HCT116 (cell line): ENCODE measurements at regions of chr14 and their contacts with region 1.

Region 1: DNA sequence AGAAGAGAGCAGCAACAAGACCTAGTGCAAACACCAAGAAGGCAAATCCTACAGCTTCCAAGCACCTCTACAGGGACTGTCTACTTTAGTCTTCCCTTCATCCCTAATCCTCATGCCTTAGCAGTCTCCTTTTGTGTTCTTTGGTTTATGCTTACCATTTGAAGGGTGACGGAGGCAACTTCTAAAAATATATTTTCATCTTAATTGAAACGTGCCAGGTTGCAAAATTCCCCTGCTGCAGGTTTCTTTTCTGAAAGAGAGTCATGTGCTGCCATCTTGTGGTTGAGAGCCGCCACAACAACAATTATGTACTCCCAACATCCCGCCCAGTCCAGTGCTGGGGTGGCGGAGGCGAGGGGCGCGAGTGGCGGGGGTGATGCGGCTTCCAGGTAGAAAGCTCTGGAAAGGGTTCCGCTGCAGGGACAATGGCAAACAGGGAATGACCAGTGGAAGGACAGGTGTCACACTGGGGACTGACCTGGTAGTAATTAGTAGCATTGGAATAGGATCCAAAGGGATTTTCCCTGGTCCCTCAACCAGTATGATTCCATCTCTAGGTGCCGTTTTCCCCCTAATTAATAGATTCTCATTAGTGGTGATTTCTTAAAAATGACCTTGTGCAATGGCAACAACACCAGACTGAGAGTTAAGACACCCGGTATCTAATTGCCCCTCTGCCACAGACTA is 80.3 kb upstream of the GNG2 start:
- DNase-seq: peak; percentile 49
- ATAC-seq: peak; percentile 84
- H3K4me3 ChIP-seq: peak overlapping the region in 1 of 2 experiments; percentile 16; a peak in 1 of 4 replicates
- H3K27ac ChIP-seq: no peak overlapping the region
- H3K4me1 ChIP-seq: peaks cover 0 to 10% of the 10 kb centered on the region in 2 experiments; a peak in 3 of 4 replicates
- H3K27me3 ChIP-seq: peaks cover 8% of the 10 kb centered on the region; the same call in 1 of the 2 replicates
- CTCF ChIP-seq: peak; percentile 72 to 90 (median 79)
- POLR2A ChIP-seq: no peak
- RAD21 ChIP-seq: peak; percentile 86

Region 2: DNA sequence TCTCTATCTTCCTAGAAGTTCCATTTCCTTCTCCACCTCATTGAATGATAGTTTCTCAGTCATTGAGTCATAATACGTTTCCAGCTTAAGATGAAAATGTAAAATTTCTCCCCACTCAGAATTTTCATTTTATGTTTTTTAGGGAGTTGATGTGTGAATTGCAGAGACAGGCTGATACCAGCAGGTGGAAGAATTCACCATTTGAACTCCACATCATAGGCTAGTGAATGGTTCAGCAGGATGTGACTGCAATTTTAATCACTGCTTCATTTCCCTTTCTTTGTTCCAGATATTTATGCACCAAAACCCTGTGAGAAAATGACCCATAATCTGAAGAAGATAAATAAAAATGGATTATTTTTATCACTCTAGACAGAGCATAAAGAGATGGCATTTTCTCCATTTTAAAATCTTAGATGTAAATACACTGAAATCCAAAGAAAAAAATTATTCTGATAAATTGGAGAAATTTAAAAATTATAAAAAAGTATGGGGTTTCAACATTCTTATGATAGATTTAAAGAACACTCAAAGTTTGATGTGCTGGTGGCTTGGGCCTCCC is 825.3 kb before region 1 on chr14:
- CTCF ChIA-PET with region 1: interaction called, 9 read pairs
- POLR2A ChIA-PET with region 1: no interaction called
- RAD21 ChIA-PET with region 1: no interaction called
- intact Hi-C with region 1: loop called (anchors 5 kb)
- DNase-seq: peak; percentile 23
- ATAC-seq: peak; percentile 52
- H3K4me3 ChIP-seq: peak overlapping the region in 1 of 2 experiments; percentile 23; a peak in 1 of 4 replicates
- H3K27ac ChIP-seq: peak overlapping the region; percentile 69
- H3K4me1 ChIP-seq: peaks cover 11 to 18% of the 10 kb centered on the region in 2 experiments
- H3K27me3 ChIP-seq: no peaks in the 10 kb centered on the region
- CTCF ChIP-seq: peak; percentile 56 to 69 (median 68)
- POLR2A ChIP-seq: no peak
- RAD21 ChIP-seq: peak; percentile 71

Region 3: DNA sequence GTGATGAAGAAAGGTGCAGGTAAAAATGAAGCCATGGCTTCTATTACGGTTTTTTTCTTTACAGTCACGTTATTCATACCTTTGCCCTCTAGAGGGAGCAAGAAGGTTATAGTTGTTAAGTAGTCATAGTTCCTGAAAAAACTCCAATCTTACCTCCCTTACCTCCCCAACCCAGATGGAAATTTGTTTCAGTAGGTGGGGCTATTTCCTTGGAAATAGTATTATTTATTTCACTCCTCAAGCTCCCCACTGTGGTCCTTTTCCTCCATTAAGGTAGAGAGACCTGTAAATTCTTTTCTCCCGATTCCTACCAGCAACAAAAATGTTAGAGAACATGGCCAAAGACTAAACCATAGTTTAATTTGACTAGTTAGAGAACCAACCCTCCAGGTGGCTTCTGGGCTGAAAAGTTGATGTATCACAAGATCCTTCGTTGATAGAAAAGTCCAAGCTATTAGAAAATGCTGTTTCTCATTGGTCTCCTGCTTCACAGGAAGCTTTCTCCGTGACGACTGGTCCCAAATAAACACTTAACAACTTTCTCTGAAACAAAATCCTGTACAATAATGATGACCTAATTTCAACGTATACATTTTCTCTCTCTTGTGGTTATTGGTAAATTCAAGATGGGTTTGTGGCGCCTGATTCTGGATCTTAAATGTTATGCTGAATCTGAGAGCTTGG is 496.6 kb before region 1 on chr14:
- CTCF ChIA-PET with region 1: interaction called, 22 read pairs
- POLR2A ChIA-PET with region 1: no interaction called
- RAD21 ChIA-PET with region 1: no interaction called
- intact Hi-C with region 1: loop called (anchors 1 kb)
- DNase-seq: peak; percentile 36
- ATAC-seq: peak; percentile 81
- H3K4me3 ChIP-seq: no peak overlapping the region
- H3K27ac ChIP-seq: no peak overlapping the region
- H3K4me1 ChIP-seq: no peaks in the 10 kb centered on the region
- H3K27me3 ChIP-seq: no peaks in the 10 kb centered on the region
- CTCF ChIP-seq: peak; percentile 55 to 84 (median 76)
- POLR2A ChIP-seq: no peak
- RAD21 ChIP-seq: peak; percentile 78

Region 4: DNA sequence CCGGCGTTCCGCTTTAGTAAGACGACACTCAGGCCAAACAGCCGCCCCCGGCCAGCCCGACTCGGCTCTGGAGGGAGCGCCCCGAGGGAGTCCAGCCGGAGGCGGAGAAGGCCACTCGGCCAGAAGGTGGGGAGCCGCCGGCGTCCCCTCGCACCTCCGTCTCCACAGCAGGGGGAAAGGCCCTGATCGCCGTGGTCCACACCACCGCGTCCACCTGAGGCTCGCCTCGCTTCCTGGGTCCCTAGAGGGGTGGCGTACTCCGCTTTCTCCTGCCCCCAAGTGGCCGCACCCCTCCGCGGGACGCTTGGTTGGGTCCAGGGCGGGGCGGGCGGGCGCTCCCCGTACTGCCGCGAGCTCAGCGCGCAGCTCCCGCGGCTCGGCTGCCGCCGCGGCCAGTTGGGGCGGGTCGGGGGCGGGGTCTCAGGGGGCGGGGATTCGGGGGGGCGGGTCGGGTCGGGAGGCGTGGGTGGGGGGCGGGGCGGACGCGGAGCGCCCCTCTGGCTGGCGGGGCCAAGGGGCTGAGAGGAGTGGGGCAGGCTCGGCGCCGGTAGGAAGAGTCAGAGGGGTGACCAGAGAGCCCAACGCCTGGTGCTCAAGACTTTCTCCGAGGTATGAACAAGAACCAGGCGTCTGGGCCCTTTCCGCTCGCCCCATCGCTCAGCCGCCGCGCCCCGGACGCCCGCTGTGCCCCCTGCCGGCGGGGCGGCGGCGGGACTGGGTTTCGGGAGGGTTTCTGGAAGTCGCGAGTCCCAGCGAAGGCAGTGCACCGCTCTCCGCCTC is 128.6 kb before region 1 on chr14 and contains the start of gene FRMD6:
- CTCF ChIA-PET with region 1: interaction called, 13 read pairs
- POLR2A ChIA-PET with region 1: no interaction called
- RAD21 ChIA-PET with region 1: interaction called in 1 of 2 experiments, 3 read pairs
- intact Hi-C with region 1: loop called (anchors 5 kb)
- DNase-seq: peak; percentile 68
- ATAC-seq: peak; percentile 82
- H3K4me3 ChIP-seq: peak within 1 kb of the TSS; percentile 84 to 91
- H3K27ac ChIP-seq: peak within 1 kb of the TSS; percentile 89
- H3K4me1 ChIP-seq: peaks cover 13 to 28% of the 10 kb centered on the region in 2 experiments
- H3K27me3 ChIP-seq: no peaks in the 10 kb centered on the region
- CTCF ChIP-seq: peak; percentile 34 to 79 (median 64)
- POLR2A ChIP-seq: peak; percentile 25
- RAD21 ChIP-seq: peak; percentile 48
- total RNA-seq, gene FRMD6: 11.4 TPM

Region 5: GRCh38 chr14:51682411-51682810 is 97.7 kb before region 1 on chr14:
- CTCF ChIA-PET with region 1: no interaction called
- POLR2A ChIA-PET with region 1: no interaction called
- RAD21 ChIA-PET with region 1: no interaction called
- intact Hi-C with region 1: no loop called
- DNase-seq: no peak
- ATAC-seq: no peak
- H3K4me3 ChIP-seq: no peak overlapping the region
- H3K27ac ChIP-seq: no peak overlapping the region
- H3K4me1 ChIP-seq: no peaks in the 10 kb centered on the region
- H3K27me3 ChIP-seq: no peaks in the 10 kb centered on the region
- CTCF ChIP-seq: no peak
- POLR2A ChIP-seq: no peak
- RAD21 ChIP-seq: no peak

Region 6: DNA sequence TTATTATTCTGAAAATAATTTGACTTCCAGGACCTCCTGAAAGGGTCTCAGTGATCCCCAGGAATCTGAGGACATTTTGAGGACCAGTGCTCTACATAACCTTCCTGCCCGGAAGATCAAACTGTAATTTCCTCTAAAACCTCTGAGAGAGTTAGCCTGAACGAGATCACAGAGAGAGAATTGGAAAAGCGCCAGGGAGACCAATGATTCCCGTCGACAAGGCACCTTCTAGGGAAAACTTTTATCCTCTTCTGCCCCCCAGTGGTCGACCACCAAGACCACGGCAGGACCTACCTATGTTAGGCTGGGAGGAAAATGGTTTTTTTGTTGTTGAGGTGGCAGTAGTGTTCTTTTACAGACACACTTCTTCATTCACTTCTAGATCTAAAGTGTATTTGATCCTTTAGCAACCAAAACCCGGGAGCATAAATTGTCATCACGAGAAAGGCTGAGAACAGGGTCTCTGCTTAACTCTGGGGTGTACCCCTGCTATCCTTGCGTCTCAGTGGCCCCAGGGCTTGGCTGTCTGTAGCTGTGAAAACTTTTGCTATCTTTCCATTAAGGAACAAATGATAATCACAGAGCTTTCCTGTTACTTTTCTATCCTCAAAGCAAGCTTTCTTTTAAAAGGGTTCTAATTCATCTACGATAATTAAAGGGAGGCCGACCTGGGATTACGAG is 351.6 kb after region 1 on chr14:
- CTCF ChIA-PET with region 1: no interaction called
- POLR2A ChIA-PET with region 1: no interaction called
- RAD21 ChIA-PET with region 1: no interaction called
- intact Hi-C with region 1: loop called (anchors 2 kb)
- DNase-seq: peak; percentile 87
- ATAC-seq: peak; percentile 98
- H3K4me3 ChIP-seq: no peak overlapping the region
- H3K27ac ChIP-seq: no peak overlapping the region
- H3K4me1 ChIP-seq: peaks cover 0 to 5% of the 10 kb centered on the region in 2 experiments; a peak in 1 of 4 replicates
- H3K27me3 ChIP-seq: no peaks in the 10 kb centered on the region
- CTCF ChIP-seq: peak; percentile 67 to 73 (median 71)
- POLR2A ChIP-seq: no peak
- RAD21 ChIP-seq: peak; percentile 77